Motor neuron (in vitro differentiated cells): ENCODE measurements at regions of chr19 and their contacts with region 1.

Region 1: DNA sequence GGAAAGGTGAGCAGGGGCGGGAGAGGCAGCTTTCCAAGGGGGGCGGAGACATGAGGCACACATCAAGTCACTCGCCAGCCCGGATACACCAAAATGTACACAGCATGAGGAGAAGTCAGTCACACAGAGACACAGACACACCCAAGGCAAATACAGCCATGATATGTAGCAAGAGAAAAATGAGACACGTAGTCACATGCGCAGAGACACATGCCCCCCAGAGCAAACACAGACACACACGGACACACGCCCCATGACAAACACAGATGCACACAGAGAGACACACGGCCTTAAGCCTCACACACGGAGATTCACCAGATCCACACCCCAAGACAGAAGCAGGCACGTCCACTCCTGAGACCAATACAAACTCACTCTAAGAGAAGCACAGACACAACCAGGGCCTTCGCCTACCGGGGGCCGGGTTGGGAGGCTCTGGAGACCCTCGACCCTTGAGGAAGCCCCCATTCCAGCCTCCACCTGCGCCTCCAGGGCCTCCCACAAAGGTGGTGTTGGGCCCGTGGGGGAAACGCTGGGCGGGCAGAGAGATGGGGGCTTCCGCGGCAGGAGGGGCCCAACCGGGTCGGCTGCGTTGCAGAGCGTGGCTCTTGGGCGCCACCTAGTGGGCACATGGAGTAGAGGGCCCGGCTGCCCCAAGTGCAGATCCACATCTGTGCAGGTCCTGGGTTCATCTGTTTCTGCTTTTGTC is 10.2 kb upstream of the TINCR start:
- ATAC-seq: peak; percentile 83 to 96 (median 90)
- H3K4me3 ChIP-seq: peak overlapping the region in 1 of 5 donors; percentile 20
- H3K27ac ChIP-seq: peak overlapping the region in 1 of 2 donors; percentile 4
- H3K4me1 ChIP-seq: peaks cover 8 to 11% of the 10 kb centered on the region in 2 donors

Region 2: DNA sequence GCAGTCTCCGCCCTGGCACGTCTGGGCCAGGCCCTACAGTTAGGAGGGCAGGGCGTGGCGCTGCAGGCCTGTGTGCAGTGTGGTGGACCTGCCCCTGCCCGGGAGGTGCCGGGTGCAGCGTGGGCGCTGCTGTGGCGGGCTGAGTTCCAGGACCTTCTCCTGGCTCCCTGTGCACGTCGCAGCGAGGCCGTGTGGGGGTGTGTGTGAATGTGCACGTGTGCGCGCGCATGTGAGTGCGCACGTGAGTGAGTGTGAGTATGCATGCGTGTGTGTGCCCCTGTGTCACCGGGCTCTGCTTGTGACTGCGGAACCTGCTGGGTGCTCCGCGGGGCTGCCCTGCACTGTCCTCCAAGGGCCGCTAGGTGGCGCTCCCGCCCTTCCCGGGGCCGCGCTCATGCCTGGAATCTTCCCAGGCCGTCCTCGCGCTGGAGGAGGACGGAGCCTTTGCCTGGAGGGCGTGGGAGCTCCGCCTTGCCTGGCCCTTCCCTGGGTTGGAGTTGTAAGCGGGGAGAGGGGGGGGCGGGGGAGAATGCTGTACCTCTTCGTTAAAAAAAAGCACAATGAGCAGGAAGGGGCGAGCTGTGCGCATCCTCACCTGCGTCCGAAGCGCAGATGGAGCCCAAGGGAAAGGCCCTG is 529.7 kb before region 1 on chr19:
- in situ Hi-C with region 1: loop called in 1 of 9 experiments (anchors 10 kb)
- ATAC-seq: peak; percentile 61 to 83 (median 73)
- H3K4me3 ChIP-seq: no peak overlapping the region
- H3K27ac ChIP-seq: no peak overlapping the region
- H3K4me1 ChIP-seq: peaks cover 26 to 31% of the 10 kb centered on the region in 2 donors

Region 3: DNA sequence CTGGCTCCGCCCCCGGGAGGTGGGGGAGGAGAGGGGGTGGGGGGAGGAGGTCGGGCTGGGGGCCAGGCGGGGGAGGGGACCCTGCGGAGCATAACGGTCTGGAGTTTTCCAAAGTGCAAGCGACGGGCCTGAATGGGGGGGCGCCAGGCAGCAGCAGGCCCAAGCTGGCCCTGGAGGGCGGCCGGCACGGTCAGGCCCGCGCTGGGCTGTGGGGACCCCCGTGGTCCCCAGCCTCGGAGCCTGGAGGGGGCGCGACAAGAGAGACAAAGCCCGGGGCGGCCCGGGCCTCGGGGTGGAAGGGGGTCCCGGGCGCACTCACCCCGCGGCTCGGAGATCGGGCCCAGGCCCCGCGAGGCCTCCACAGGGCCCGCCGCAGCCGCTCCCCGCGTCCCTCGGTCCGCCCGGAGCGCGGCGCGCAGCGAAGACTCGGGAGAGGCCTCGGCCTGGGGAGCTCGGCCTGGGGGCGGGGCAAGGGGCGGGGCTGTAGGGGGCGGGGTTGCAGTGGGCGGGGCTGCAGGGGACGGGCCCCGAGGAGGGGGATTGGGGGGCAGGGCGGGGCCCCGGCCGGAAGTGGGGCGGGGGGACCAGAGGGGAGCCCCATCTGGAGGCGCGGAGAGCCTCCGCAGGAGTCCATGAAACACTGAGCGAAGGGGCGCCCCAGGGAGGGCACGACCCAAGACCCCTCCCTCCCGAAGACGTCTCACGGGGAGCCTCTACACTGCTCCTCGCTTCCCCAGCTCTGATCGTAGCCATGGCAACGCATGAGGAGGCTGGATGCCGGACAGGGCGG is 284.9 kb before region 1 on chr19:
- in situ Hi-C with region 1: loop called in 1 of 9 experiments (anchors 25 kb)
- ATAC-seq: peak; percentile 79 to 86 (median 81)
- H3K4me3 ChIP-seq: peak overlapping the region; percentile 38 to 62 (median 51)
- H3K27ac ChIP-seq: peak overlapping the region; percentile 79 to 94
- H3K4me1 ChIP-seq: peaks cover 10 to 23% of the 10 kb centered on the region in 2 donors

Region 4: GRCh38 chr19:5345895-5346386 is 232.0 kb before region 1 on chr19:
- in situ Hi-C with region 1: no loop called
- ATAC-seq: peak in 7 of 8 experiments; percentile 48 to 82 (median 71)
- H3K4me3 ChIP-seq: no peak overlapping the region
- H3K27ac ChIP-seq: no peak overlapping the region
- H3K4me1 ChIP-seq: peaks cover 0 to 12% of the 10 kb centered on the region in 2 donors

Region 5: GRCh38 chr19:6260912-6261650 is 683.1 kb after region 1 on chr19:
- in situ Hi-C with region 1: no loop called
- ATAC-seq: peak; percentile 31 to 72 (median 45)
- H3K4me3 ChIP-seq: no peak overlapping the region
- H3K27ac ChIP-seq: no peak overlapping the region
- H3K4me1 ChIP-seq: no peaks in the 10 kb centered on the region